Sciatic nerve (tissue), 2 donors: ENCODE measurements at regions of chr9 and their contacts with region 1.

Region 1: GRCh38 chr9:90860826-90861225 is 59.2 kb downstream of the SYK start:
- DNase-seq: no peak
- ATAC-seq: peak; percentile 41

Region 2: GRCh38 chr9:89579741-89580385 is 1281.0 kb before region 1 on chr9:
- intact Hi-C with region 1: loop called (anchors 10 kb)
- DNase-seq: no peak
- ATAC-seq: no peak